PC-3 (cell line): ENCODE measurements at regions of chr12 and their contacts with region 1.

Region 1: DNA sequence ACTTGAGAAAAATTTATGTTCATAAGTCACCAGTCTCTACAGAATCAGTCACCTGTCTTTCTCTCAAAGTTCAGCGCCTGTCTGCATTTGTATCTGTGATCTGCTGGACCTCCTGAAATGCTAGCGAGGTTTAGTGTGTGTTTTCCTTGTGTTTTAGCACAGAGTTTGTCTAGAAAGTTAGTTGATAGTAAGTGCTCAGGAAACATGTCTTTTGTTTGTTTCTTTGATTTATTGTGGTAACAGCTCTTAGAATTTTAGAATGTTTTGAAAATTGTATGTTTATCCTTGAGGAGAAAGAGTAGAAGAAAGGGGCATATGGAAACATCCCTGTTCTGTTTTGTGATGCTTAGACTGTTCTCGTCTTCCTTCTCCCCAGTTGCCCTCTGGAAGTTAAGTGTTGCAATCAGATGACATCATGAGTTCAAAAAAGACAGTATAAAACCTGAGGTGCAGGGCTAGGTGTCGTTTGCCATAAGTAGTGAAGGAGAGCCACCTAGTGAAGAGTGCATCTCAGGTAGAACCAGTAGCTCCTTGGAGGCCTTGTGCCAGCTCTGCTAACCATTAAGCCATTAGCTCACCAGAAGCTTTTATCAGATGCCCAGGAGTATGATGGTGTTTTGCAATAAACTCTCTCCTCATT is 44.8 kb downstream of the FBXW8 start:
- DNase-seq: peak; percentile 86
- ATAC-seq: peak; percentile 34; the same call in 1 of the 2 replicates
- H3K4me3 ChIP-seq: no peak overlapping the region
- H3K27ac ChIP-seq: no peak overlapping the region
- H3K4me1 ChIP-seq: peaks cover 36% of the 10 kb centered on the region
- H3K27me3 ChIP-seq: no peaks in the 10 kb centered on the region
- CTCF ChIP-seq: peak; percentile 88

Region 2: GRCh38 chr12:116708826-116709756 is 246.4 kb before region 1 on chr12:
- CTCF ChIA-PET with region 1: interaction called, 9 read pairs
- POLR2A ChIA-PET with region 1: no interaction called
- intact Hi-C with region 1: loop called (anchors 2 kb)
- DNase-seq: peak; percentile 86
- ATAC-seq: peak; percentile 92
- H3K4me3 ChIP-seq: peak overlapping the region; percentile 61
- H3K27ac ChIP-seq: no peak overlapping the region
- H3K4me1 ChIP-seq: peaks cover 13% of the 10 kb centered on the region
- H3K27me3 ChIP-seq: peaks cover 8% of the 10 kb centered on the region
- CTCF ChIP-seq: peak; percentile 92

Region 3: GRCh38 chr12:116818948-116819832 is 136.3 kb before region 1 on chr12:
- CTCF ChIA-PET with region 1: no interaction called
- POLR2A ChIA-PET with region 1: no interaction called
- intact Hi-C with region 1: loop called (anchors 1 kb)
- DNase-seq: peak; percentile 92
- ATAC-seq: peak; percentile 92
- H3K4me3 ChIP-seq: peak overlapping the region; percentile 86
- H3K27ac ChIP-seq: peak overlapping the region; percentile 73
- H3K4me1 ChIP-seq: peaks cover 10% of the 10 kb centered on the region
- H3K27me3 ChIP-seq: no peaks in the 10 kb centered on the region
- CTCF ChIP-seq: no peak

Region 4: GRCh38 chr12:116916714-116917114 is 38.8 kb before region 1 on chr12:
- CTCF ChIA-PET with region 1: no interaction called
- POLR2A ChIA-PET with region 1: interaction called, 4 read pairs
- intact Hi-C with region 1: loop called (anchors 1 kb)
- DNase-seq: peak; percentile 90
- ATAC-seq: peak; percentile 72
- H3K4me3 ChIP-seq: peak overlapping the region; percentile 46
- H3K27ac ChIP-seq: peak overlapping the region; percentile 89
- H3K4me1 ChIP-seq: peaks cover 54% of the 10 kb centered on the region
- H3K27me3 ChIP-seq: no peaks in the 10 kb centered on the region
- CTCF ChIP-seq: peak; percentile 66

Region 5: GRCh38 chr12:116982791-116983411 is 27.4 kb after region 1 on chr12:
- CTCF ChIA-PET with region 1: no interaction called
- POLR2A ChIA-PET with region 1: no interaction called
- intact Hi-C with region 1: loop called (anchors 2 kb)
- DNase-seq: no peak
- ATAC-seq: no peak
- H3K4me3 ChIP-seq: no peak overlapping the region
- H3K27ac ChIP-seq: no peak overlapping the region
- H3K4me1 ChIP-seq: no peaks in the 10 kb centered on the region
- H3K27me3 ChIP-seq: no peaks in the 10 kb centered on the region
- CTCF ChIP-seq: no peak

Region 6: GRCh38 chr12:117236456-117237001 is 281.0 kb after region 1 on chr12:
- CTCF ChIA-PET with region 1: no interaction called
- POLR2A ChIA-PET with region 1: no interaction called
- intact Hi-C with region 1: no loop called
- DNase-seq: peak; percentile 89
- ATAC-seq: peak; percentile 97
- H3K4me3 ChIP-seq: no peak overlapping the region
- H3K27ac ChIP-seq: no peak overlapping the region
- H3K4me1 ChIP-seq: no peaks in the 10 kb centered on the region
- H3K27me3 ChIP-seq: peaks cover 15% of the 10 kb centered on the region; the same call in 1 of the 2 replicates
- CTCF ChIP-seq: peak; percentile 97